ENCODE measurements at regions of chr4 and their contacts with region 1.

Region 1: DNA sequence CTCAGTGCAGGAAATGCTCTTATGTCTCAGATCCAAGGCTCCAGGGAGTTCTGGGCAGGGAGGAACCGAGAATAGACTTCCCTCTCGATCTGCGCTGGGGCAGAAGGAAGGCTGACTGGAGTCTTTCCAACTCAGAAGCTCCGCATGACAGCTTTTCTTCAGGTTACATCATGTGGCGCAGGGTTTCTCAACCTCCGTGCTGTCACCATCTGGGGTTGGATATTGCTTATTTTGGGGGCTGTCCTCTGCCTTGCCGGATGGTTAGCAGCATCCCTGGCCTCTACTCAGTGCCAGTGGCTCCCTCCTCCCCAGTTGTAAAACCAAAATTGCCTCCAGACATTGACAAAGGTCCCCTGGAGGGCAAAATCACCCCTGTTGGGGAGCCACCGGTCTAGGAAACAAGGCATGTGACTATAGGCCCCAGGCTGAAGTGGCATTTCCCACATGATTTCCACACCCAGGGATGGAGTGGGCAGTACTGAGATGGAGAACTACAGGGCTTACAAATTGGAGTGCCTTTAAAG is 21.4 kb downstream of the REELD1 start:
- DNase-seq: no peak
- ATAC-seq: peak; percentile 36 to 72 (median 62)
- H3K4me3 ChIP-seq: no peak overlapping the region
- H3K27ac ChIP-seq: no peak overlapping the region
- H3K4me1 ChIP-seq: no peaks in the 10 kb centered on the region
- H3K27me3 ChIP-seq: no peaks in the 10 kb centered on the region
- CTCF ChIP-seq: no peak
- POLR2A ChIP-seq: no peak

Region 2: DNA sequence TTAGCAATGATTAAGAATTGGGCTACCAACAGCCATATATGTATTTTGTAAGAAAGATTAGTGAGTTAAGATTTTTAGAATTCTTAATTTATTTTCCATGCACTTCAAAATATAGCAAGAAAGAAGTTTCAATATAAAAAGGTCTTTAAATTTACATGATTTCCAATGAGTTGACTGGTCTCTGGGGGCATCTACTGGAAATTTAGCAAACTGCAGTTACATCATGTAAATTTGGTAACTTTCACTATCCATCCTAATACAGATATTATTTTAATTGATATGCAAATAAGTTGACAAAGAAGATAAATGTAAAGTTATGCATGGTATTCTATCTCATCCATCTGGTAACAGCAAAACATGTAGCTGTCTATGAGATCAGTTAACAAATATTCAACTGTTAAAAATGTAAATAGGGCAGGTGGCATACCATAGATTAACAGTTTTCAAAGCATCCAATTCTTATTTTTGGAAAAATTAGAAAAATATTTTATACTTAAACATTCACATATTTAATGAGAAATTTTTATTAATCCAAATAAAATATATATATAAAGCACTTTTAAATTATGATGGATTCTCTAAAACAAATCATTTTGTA is 680.9 kb after region 1 on chr4:
- intact Hi-C with region 1: loop called in 1 of 2 experiments (anchors 10 kb)
- DNase-seq: no peak
- ATAC-seq: peak in 3 of 4 donors; percentile 62 to 69 (median 69)
- H3K4me3 ChIP-seq: no peak overlapping the region
- H3K27ac ChIP-seq: no peak overlapping the region
- H3K4me1 ChIP-seq: no peaks in the 10 kb centered on the region
- H3K27me3 ChIP-seq: peaks cover 0 to 7% of the 10 kb centered on the region in 2 donors
- CTCF ChIP-seq: peak; percentile 74 to 81 (median 78)
- POLR2A ChIP-seq: no peak